AG04450 (cell line): ENCODE measurements at regions of chr13 and their contacts with region 1.

Region 1: DNA sequence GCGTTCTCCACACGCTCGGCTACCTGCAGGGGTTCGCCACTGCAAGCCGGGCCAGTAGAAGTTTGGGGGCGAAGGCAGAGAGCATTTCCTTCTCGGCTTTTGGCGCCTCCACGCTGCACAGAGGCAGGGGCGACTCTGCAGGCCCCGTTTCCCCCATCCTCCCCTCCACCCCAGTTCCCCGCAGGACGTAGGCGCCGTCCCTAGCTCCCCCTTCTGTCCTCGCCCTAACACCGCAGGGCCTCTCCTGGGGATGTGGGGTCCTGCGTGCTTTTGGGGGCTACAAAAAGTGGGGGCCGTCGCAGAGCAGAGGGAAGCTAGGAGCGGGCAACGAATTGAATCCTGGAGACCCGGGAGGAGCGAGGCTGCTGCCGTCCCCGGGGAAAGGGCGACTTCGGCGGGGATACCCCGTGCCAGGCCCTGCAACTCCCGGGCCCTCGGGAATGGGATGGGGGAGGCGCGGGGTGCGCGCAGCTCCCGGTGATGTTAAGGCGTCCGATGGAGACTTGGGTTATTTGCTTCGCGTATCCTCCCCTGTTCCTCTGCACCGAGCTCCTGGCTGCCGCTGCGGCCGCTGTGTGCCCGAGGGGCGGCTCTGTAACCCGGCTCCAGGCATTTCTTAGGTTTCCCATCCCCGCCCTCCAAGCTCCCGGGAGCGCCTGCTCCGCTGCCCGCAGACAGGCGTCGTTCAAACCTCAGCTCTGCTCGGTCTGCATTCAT is 255.9 kb upstream of the SOX21 start:
- DNase-seq: no peak
- H3K4me3 ChIP-seq: peak overlapping the region; percentile 20; the same call in 1 of the 2 replicates
- H3K27ac ChIP-seq: no peak overlapping the region
- H3K27me3 ChIP-seq: peaks cover 59% of the 10 kb centered on the region
- CTCF ChIP-seq: 0 out of 2 replicates have a peak, but pooled peaks have one; percentile 7

Region 2: DNA sequence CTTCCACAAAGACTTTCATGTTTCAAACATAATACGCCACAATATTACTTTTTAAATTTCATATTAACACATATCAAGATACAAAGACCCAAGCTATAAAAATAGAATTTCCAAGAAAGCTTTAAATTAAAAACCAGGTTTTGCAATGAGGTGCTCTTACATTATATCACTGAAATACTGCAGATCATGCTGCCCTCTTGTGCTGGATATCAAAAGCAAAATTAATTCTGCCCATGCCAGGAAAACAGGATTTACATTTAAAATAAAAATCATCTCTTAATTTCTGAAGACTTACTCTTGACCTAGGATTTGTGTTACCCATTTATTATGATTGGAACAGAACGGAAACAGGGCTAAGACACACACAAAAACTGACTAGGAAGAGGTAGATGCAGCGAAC is 188.0 kb after region 1 on chr13:
- CTCF ChIA-PET with region 1: interaction called, 10 read pairs
- POLR2A ChIA-PET with region 1: no interaction called
- DNase-seq: no peak
- H3K4me3 ChIP-seq: no peak overlapping the region
- H3K27ac ChIP-seq: no peak overlapping the region
- H3K27me3 ChIP-seq: no peaks in the 10 kb centered on the region
- CTCF ChIP-seq: 0 out of 2 replicates have a peak, but pooled peaks have one; percentile 15